Aorta (tissue), 5 donors: ENCODE measurements at regions of chr17 and their contacts with region 1.

Region 1: GRCh38 chr17:50707289-50708049 is at the start of gene ANKRD40:
- DNase-seq: peak; percentile 94 to 95
- ATAC-seq: peak; percentile 93
- H3K4me3 ChIP-seq: peak within 1 kb of the TSS; percentile 71 to 73
- H3K27ac ChIP-seq: peak within 1 kb of the TSS; percentile 96 to 98
- H3K4me1 ChIP-seq: no peaks in the 10 kb centered on the region
- H3K27me3 ChIP-seq: no peaks in the 10 kb centered on the region
- total RNA-seq, gene ANKRD40: 53.2 to 55.5 TPM

Region 2: DNA sequence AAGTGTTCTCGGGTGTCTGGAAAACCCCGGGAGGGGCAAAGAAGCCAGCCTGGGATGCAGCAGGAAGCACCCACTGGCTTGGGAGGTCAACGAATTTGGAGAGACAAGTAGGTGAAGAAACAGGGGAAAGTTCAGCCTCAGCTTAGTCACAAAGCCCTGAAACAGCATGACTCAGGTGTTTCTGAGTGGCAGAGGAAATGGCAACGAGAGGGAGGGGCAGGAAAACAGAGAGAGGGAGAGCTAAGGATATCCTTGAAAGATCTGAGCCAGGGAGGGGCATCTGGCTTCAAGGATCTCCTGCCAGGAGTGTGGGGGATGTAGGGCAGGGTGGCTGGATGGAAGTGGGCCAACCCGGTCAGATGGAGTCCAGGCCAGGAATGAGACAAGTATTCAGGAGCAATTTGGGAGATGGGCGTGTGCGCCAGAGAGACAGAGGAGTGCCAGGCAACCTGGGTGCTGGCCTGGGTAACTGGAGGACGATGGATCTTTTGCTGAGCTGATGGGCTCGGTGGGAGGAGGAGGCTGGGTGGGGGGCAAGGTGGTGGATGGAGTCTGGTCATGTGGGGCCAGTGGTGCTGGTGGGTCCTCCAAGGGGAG is 45.6 kb before region 1 on chr17:
- intact Hi-C with region 1: no loop called
- DNase-seq: peak; percentile 84 to 85
- ATAC-seq: peak; percentile 61
- H3K4me3 ChIP-seq: no peak overlapping the region
- H3K27ac ChIP-seq: no peak overlapping the region
- H3K4me1 ChIP-seq: no peaks in the 10 kb centered on the region
- H3K27me3 ChIP-seq: no peaks in the 10 kb centered on the region

Region 3: DNA sequence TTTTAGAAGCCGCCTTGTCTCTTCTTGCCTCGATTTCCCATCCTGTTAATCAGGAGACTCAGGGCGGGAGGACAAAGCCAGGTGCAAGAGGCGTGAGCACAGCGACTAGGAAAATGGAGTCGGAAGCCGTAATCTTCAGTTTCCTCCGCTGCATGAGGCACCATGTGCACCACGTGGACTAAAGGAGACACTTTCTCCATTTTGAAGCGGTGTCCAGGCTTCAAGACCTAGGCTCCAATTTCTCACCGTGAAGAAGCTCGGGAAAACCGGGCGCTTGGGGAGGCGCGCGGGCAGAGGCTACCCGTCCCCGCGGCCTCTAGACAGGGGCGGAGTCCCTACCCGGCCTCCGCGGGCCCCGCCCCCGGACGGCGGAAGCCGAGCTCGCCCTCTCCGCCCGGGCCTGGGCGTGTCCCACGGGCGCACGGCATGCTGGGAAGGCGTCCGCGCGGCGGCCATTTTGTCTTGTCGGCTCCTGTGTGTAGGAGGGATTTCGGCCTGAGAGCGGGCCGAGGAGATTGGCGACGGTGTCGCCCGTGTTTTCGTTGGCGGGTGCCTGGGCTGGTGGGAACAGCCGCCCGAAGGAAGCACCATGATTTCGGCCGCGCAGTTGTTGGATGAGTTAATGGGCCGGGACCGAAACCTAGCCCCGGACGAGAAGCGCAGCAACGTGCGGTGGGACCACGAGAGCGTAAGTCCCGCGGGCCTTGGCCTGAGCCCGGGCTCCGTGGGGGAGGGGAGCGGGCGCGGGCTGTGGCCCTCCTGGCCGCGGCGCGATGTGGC is 11.9 kb after region 1 on chr17 and contains the start of gene LUC7L3:
- intact Hi-C with region 1: loop called in 1 of 2 experiments (anchors 1 kb)
- DNase-seq: peak; percentile 96 to 98
- ATAC-seq: peak; percentile 99
- H3K4me3 ChIP-seq: peak within 1 kb of the TSS; percentile 83 to 99
- H3K27ac ChIP-seq: peak within 1 kb of the TSS; percentile 76 to 92
- H3K4me1 ChIP-seq: peaks cover 0 to 2% of the 10 kb centered on the region in 2 donors
- H3K27me3 ChIP-seq: no peaks in the 10 kb centered on the region
- total RNA-seq, gene LUC7L3: 123 to 189 TPM